Mammary epithelial cell (primary cell): ENCODE measurements at regions of chr2 and their contacts with region 1.

Region 1: DNA sequence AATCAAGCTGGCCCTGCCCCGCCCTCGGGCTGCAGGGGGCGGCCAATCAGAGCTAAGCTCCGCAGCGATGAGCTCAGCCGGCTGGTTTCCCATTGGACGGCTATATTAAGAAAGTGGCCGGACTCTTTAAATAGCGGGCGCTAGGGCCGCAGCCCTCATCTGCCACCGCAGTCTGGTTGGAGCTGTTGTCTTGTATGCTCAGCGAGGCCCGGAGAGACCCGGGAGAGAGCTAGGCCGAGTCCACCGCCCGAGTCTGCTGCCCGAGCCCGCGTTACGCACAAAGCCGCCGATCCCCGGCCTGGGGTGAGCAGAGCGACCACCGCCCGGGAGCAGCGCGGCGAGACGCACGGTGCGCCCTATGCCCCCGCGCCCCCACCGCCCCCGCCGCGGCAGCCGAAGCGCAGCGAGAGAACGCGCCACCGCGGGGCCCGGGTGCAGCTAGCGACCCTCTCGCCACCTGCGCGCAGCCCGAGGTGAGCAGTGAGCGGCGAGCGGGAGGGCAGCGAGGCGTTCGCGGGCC is at the start of gene RHOB:
- DNase-seq: peak; percentile 97
- H3K4me3 ChIP-seq: peak within 1 kb of the TSS; percentile 64 to 81 (median 70)
- H3K27ac ChIP-seq: peak within 1 kb of the TSS; percentile 60
- H3K4me1 ChIP-seq: peaks cover 32% of the 10 kb centered on the region
- H3K27me3 ChIP-seq: no peaks in the 10 kb centered on the region
- CTCF ChIP-seq: no peak
- total RNA-seq, gene RHOB: 26.2 to 53.5 TPM

Region 2: DNA sequence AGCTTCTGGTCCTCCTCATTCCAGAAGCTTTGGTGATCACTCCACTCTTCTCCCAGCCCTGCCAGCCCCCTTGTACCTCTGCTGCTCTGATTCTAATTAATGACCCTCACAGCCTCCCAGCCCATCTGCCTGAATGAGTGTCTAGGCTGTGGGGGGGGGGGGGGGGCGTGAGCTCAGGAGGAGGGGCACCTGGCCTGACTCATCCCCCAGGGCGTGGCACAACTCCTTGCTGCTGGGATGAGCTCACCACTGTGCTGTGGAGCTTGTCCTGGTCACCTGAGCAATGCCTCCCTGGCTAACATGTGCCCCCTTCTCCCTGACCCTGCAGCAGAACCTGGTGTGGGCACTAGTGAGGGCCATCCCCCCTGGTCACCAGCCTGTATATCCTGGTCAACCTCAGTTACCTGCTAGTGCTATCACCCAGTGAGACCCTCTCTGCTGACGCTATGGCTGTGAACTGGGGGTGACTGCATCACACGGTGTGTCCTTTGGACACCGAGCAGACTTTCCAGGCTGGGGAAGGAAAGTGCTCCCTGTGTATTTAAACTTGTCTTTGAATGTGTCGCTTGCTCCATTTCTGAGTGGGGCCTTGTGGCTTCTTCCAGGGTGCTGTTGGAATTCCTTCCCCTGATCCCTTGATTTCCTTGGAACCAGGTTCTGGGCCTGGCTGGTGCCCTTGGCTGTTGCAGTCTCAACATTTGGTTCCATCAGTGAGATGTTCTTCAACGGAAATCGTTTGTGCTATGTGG is 54.9 kb before region 1 on chr2:
- CTCF ChIA-PET with region 1: interaction called, 14 read pairs
- dilution Hi-C with region 1: no loop called
- in situ Hi-C with region 1: no loop called
- intact Hi-C with region 1: loop called (anchors 1 kb)
- DNase-seq: peak; percentile 75
- H3K4me3 ChIP-seq: no peak overlapping the region
- H3K27ac ChIP-seq: no peak overlapping the region
- H3K4me1 ChIP-seq: peaks cover 8% of the 10 kb centered on the region
- H3K27me3 ChIP-seq: no peaks in the 10 kb centered on the region
- CTCF ChIP-seq: no peak

Region 3: GRCh38 chr2:20429528-20429927 is 17.4 kb before region 1 on chr2:
- CTCF ChIA-PET with region 1: no interaction called
- dilution Hi-C with region 1: no loop called
- in situ Hi-C with region 1: no loop called
- intact Hi-C with region 1: no loop called
- DNase-seq: peak; percentile 45
- H3K4me3 ChIP-seq: no peak overlapping the region
- H3K27ac ChIP-seq: no peak overlapping the region
- H3K4me1 ChIP-seq: peaks cover 32% of the 10 kb centered on the region
- H3K27me3 ChIP-seq: no peaks in the 10 kb centered on the region
- CTCF ChIP-seq: no peak

Region 4: DNA sequence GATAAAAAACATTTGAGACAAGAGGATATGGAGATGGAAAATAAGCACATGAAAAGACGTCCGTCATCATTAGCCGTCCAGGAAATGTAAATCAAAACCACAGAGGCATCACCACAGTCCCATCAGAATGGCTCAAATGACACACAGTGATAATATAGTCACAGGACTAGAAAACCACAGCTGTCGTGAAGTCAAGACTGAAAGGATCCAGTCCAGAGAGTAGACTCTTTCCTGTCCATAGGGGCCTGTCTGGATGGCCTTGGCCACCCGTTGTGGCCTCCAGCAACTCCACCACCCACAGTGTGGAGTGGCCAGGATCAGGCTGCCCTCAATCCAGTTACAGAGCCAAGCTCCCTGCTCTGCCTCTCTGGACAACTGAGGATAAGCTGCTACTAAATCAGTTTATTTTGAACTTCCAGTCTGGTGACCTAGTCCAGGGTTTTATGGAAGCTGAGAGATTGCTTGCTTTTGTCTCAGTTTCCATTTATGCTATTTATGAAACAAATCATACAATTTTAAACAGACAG is 60.3 kb after region 1 on chr2:
- CTCF ChIA-PET with region 1: no interaction called
- dilution Hi-C with region 1: no loop called
- in situ Hi-C with region 1: no loop called
- intact Hi-C with region 1: loop called (anchors 5 kb)
- DNase-seq: no peak
- H3K4me3 ChIP-seq: no peak overlapping the region
- H3K27ac ChIP-seq: no peak overlapping the region
- H3K4me1 ChIP-seq: peaks cover 19% of the 10 kb centered on the region
- H3K27me3 ChIP-seq: no peaks in the 10 kb centered on the region
- CTCF ChIP-seq: no peak

Region 5: DNA sequence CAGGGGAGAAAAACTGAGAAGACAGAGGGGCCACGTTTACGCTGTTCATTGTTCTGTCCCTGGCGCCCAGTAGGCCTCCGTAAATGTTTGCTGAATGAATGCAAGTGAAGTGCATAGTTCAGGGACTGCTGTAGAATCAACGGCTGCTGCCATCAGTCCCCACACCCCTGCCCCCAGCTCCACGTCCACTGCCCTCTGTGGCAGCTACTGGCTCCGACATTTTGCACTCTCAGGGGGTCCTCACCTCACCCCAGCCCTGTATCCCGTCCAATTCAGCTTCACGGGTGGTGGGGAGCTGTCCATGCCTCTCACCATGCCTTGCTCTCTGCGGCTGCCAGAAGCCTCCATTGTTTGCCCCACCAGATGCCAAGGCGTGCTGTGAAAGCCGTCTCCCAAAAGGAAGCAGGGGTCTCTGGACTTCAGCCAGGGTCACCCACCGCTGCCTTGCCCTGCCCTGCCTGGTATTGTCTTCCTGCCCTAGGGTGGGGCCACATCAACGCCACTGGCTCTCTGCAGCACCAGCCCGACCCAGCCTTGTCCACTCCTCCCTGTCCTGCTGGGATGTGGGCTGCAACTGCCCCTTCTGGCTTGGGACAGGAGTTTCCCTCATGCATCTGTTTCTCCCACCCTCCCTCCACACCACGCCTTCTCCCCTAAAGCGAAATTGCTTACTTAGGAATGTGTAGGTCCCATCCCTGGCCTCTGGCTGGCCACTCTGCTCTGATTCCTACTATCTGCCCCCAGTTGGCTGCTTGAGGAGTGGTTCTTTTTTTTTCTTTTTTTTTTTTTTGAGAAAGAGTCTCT is 85.9 kb after region 1 on chr2:
- CTCF ChIA-PET with region 1: no interaction called
- dilution Hi-C with region 1: no loop called
- in situ Hi-C with region 1: no loop called
- intact Hi-C with region 1: no loop called
- DNase-seq: no peak
- H3K4me3 ChIP-seq: no peak overlapping the region
- H3K27ac ChIP-seq: no peak overlapping the region
- H3K4me1 ChIP-seq: no peaks in the 10 kb centered on the region
- H3K27me3 ChIP-seq: no peaks in the 10 kb centered on the region
- CTCF ChIP-seq: no peak

Region 6: GRCh38 chr2:20625491-20626391 is 178.8 kb after region 1 on chr2:
- CTCF ChIA-PET with region 1: no interaction called
- dilution Hi-C with region 1: loop called (anchors 5 kb)
- in situ Hi-C with region 1: no loop called
- intact Hi-C with region 1: no loop called
- DNase-seq: no peak
- H3K4me3 ChIP-seq: no peak overlapping the region
- H3K27ac ChIP-seq: no peak overlapping the region
- H3K4me1 ChIP-seq: no peaks in the 10 kb centered on the region
- H3K27me3 ChIP-seq: no peaks in the 10 kb centered on the region
- CTCF ChIP-seq: no peak

Region 7: DNA sequence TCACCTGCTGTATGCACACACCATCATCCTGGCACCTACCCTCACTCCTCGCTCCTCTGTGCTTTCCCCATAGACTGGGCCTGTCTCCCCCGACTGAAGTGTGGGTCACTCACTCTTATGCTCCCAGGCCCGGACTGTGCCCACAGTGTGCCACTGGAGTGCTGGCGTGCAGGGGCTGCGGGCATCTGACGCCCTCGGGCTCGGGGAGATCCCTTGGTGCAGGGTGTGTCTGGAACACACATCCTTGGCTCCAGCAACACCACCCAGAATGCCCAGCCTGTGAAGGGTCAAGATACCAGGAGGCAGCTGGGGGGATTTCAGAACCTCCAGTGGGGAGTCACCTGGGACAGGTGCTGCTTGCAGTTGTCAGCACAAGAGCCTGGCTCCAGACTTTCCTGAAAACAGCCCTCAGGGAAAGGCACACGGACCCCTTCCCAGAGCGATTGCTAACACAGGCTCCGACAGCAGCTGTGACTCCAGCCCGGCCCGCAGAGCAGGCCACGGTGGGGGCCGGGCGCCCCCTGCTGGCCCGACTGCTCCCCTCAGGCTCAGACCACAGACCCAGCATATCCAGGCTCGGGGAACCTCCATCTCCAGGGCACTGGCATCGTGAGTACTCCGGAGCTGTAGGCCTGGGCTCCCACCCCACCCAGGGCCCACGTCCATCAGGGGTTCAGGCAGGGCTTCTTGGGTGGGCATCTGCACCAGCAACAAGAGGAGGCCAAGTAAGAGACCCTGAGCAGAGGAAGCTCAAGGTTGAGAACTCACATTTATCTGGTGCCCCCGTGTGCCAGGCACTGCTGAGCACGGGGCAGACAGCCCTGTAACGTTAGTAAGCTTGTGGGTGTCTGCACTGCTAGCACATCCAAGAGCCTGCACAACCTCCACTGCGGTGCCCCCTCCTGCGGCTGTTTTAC is 195.3 kb after region 1 on chr2:
- CTCF ChIA-PET with region 1: interaction called, 4 read pairs
- dilution Hi-C with region 1: no loop called
- in situ Hi-C with region 1: loop called in 1 of 2 experiments (anchors 5 kb)
- intact Hi-C with region 1: loop called (anchors 1 kb)
- DNase-seq: peak; percentile 62
- H3K4me3 ChIP-seq: no peak overlapping the region
- H3K27ac ChIP-seq: no peak overlapping the region
- H3K4me1 ChIP-seq: peaks cover 10% of the 10 kb centered on the region
- H3K27me3 ChIP-seq: no peaks in the 10 kb centered on the region
- CTCF ChIP-seq: peak; percentile 79 to 95